Thyroid gland (tissue), 4 donors: ENCODE measurements at regions of chr18 and their contacts with region 1.

Region 1: GRCh38 chr18:62128157-62128556 is 58.7 kb downstream of the PIGN start:
- DNase-seq: no peak
- H3K4me3 ChIP-seq: no peak overlapping the region
- H3K27ac ChIP-seq: no peak overlapping the region
- H3K4me1 ChIP-seq: no peaks in the 10 kb centered on the region
- H3K27me3 ChIP-seq: no peaks in the 10 kb centered on the region
- CTCF ChIP-seq: no peak
- POLR2A ChIP-seq: no peak

Region 2: DNA sequence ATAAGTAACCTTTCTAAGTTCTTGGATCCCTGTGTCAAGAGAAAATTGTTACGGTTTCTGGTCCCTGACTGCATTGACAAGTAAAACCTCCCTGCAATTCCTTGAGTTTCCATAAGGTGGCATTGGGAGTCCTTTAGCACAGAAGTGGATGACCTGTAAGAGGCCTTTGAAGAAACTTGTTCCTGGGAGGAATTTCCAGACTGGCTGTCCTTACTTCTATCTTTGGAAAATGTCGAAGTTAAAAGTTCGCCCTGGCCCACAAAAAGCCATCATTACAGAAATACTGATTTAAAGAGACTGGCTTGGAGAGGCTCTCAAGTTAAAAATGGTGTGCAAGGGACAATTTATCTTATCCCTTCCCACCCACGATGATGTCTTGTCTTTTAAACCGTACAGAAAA is 576.6 kb before region 1 on chr18:
- intact Hi-C with region 1: loop called (anchors 10 kb)
- DNase-seq: peak; percentile 13 to 22
- H3K4me3 ChIP-seq: no peak overlapping the region
- H3K27ac ChIP-seq: no peak overlapping the region
- H3K4me1 ChIP-seq: no peaks in the 10 kb centered on the region
- H3K27me3 ChIP-seq: no peaks in the 10 kb centered on the region
- CTCF ChIP-seq: peak; percentile 58 to 91 (median 78)
- POLR2A ChIP-seq: no peak

Region 3: GRCh38 chr18:61992285-61992684 is 135.9 kb before region 1 on chr18:
- intact Hi-C with region 1: no loop called
- DNase-seq: no peak
- H3K4me3 ChIP-seq: no peak overlapping the region
- H3K27ac ChIP-seq: peak overlapping the region in 1 of 3 donors; percentile 29
- H3K4me1 ChIP-seq: peaks cover 0 to 4% of the 10 kb centered on the region in 2 donors
- H3K27me3 ChIP-seq: no peaks in the 10 kb centered on the region
- CTCF ChIP-seq: no peak
- POLR2A ChIP-seq: no peak